ENCODE measurements at regions of chr9 and their contacts with region 1.

Region 1: DNA sequence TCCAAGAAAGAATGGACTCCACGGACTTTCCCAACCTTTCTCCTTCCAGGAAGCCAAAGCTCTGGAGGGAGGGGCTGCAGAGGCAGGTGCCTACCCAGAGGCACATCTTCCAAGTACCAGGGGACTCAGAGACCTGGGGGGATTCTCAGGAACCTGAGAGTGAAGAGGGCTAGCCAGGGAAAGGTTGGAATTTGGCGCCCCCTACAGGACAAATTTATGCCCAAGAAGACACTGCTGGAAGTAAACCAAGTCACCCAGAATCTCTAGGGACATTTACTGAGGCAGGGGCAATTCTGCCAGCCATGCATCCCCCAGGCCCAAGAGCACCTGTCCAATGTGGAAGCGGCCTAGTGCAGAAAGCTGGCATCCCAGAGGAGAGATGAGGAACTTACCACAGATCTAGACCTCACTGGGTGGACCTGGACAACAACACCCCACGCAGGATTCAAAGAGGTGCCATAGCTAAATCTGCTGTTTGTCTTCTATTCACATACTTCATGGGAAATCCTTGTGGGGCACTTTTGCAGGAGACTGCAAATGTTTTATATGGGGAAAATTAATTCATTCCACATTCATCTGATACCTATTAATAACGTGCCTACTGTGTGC is 25.9 kb upstream of the IDNK start:
- DNase-seq: no peak
- H3K4me3 ChIP-seq: no peak overlapping the region
- CTCF ChIP-seq: peak; percentile 36

Region 2: GRCh38 chr9:83583151-83584014 is 13.6 kb before region 1 on chr9:
- CTCF ChIA-PET with region 1: interaction called, 29 read pairs
- POLR2A ChIA-PET with region 1: no interaction called
- DNase-seq: peak; percentile 19
- H3K4me3 ChIP-seq: no peak overlapping the region
- CTCF ChIP-seq: peak; percentile 76

Region 3: GRCh38 chr9:83617299-83617698 is 20.3 kb after region 1 on chr9:
- CTCF ChIA-PET with region 1: interaction called, 22 read pairs
- POLR2A ChIA-PET with region 1: no interaction called
- DNase-seq: no peak
- H3K4me3 ChIP-seq: no peak overlapping the region
- CTCF ChIP-seq: no peak

Region 4: GRCh38 chr9:83622939-83623678 is 26.1 kb after region 1 on chr9 and contains the start of gene IDNK:
- CTCF ChIA-PET with region 1: interaction called, 10 read pairs
- POLR2A ChIA-PET with region 1: no interaction called
- DNase-seq: no peak
- H3K4me3 ChIP-seq: peak within 1 kb of the TSS; percentile 65
- CTCF ChIP-seq: no peak

Measured in AG04449 (cell line).